AG04449 (cell line): ENCODE measurements at regions of chr2 and their contacts with region 1.

Region 1: GRCh38 chr2:96509114-96509846 is 4.1 kb upstream of the NEURL3 start:
- DNase-seq: peak; percentile 17
- H3K4me3 ChIP-seq: no peak overlapping the region
- CTCF ChIP-seq: peak; percentile 99

Region 2: GRCh38 chr2:96138179-96139145 is 370.8 kb before region 1 on chr2 and contains the start of gene ASTL:
- CTCF ChIA-PET with region 1: interaction called, 15 read pairs
- POLR2A ChIA-PET with region 1: no interaction called
- DNase-seq: no peak
- H3K4me3 ChIP-seq: no peak within 1 kb of the TSS
- CTCF ChIP-seq: peak; percentile 68

Region 3: DNA sequence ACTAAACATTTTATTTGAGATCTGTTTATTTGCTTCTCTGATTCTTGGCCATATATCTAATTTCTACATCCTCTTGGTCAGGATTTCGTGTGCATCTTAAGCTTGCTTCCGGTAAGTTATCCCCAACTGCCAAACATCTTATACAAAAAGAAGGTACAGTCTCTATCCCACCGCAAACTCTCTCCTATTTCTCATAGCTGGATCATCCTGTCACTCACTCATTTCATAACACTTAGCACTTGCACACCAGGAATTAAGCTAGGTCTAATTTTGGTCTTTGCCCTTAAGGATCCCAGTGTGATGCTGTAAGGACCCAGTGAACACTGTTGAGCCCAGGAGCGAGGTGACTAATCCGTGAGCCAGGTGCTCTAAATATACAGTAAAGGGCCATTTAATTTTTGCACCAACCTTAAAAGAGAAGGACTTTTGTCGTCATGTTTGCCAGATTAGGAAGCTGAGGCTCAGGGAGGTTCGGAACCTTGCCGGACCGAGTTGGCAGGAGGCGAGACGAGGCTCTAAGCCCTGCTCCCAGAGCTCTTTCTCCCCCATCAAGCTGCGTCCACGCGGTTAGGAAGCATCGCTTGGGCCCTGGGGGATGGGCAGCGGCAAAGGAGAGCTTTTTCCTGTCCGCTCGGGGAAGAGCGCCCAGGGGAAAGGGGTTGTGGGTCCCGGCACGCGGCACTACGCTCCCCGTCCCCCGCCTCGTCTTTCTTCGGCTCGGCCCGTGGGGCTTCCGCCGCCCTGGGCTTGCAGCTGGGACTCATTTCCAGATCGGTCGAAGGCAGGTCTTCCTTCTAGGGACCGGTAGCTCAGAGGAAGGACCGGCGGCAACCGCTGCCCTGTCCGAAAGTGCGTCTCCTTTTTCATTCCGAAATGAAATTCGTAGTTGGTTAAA is 188.3 kb before region 1 on chr2:
- CTCF ChIA-PET with region 1: interaction called, 10 read pairs
- POLR2A ChIA-PET with region 1: no interaction called
- DNase-seq: no peak
- H3K4me3 ChIP-seq: peak overlapping the region; percentile 65
- CTCF ChIP-seq: no peak

Region 4: GRCh38 chr2:96413323-96413722 is 96.0 kb before region 1 on chr2:
- CTCF ChIA-PET with region 1: interaction called, 340 read pairs
- POLR2A ChIA-PET with region 1: no interaction called
- DNase-seq: no peak
- H3K4me3 ChIP-seq: no peak overlapping the region
- CTCF ChIP-seq: no peak

Region 5: DNA sequence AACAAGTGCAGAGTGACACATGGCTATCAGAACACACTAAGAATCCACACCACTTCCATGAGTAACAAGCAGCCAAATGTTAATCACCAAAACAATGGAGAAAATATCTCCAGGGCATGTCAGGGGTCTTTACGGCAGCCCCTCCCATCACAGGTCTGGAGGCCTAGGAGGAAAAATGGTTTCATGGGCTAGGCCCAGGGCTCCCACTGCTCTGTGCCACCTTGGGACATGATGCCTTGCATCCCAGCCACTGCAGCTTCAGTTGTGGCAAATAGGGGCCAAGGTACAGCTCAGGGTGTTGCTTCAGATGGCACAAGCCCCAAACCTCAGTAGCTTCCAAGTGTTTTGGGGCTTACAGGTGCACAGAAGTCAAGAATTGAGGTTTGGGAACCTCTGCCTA is 70.7 kb before region 1 on chr2:
- CTCF ChIA-PET with region 1: no interaction called
- POLR2A ChIA-PET with region 1: no interaction called
- DNase-seq: no peak
- H3K4me3 ChIP-seq: no peak overlapping the region
- CTCF ChIP-seq: no peak

Region 6: DNA sequence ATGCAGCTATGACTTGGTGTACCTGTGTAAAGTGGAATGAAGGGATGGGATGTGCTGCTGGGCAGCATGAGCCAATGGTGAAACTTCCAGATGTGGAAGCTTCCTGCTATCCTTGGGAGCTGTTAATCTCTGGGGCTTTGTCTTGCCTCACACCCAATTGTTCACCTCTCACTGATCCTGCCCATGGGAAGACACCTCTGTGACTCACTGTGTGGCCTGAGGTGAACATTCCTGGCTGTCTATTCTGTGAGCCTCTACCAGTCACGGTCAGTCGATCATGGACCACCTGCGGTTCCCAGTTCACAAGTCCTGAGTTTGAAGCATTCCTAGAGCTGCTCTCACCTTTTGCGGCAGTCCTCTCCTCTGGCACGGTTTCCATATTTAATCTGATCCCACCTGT is 16.2 kb before region 1 on chr2:
- CTCF ChIA-PET with region 1: interaction called, 42 read pairs
- POLR2A ChIA-PET with region 1: no interaction called
- DNase-seq: no peak
- H3K4me3 ChIP-seq: no peak overlapping the region
- CTCF ChIP-seq: no peak

Region 7: GRCh38 chr2:96536445-96537065 is 27.3 kb after region 1 on chr2 and contains the start of gene ARID5A:
- CTCF ChIA-PET with region 1: interaction called, 98 read pairs
- POLR2A ChIA-PET with region 1: no interaction called
- DNase-seq: no peak
- H3K4me3 ChIP-seq: peak within 1 kb of the TSS; percentile 70
- CTCF ChIP-seq: peak; percentile 18

Region 8: DNA sequence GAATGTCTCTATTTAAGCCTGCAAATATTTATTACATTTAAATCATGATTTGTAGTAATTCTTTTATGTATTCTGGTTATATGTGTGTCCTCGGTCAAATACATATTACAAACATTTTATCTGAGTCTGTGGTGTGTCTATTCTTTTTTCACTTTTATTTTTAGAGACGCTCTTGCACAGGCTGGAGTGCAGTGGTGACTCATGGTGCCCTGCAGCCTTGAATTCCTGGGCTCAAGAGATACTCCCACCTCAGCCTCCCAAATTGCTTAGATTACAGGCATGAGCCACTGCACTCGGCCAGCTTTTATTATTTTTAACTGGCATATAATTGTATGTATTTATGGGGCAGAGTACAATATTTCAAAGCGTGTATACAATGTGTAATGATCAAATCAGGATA is 74.7 kb after region 1 on chr2:
- CTCF ChIA-PET with region 1: no interaction called
- POLR2A ChIA-PET with region 1: no interaction called
- DNase-seq: no peak
- H3K4me3 ChIP-seq: no peak overlapping the region
- CTCF ChIP-seq: no peak

Region 9: GRCh38 chr2:96625571-96626552 is 116.6 kb after region 1 on chr2:
- CTCF ChIA-PET with region 1: no interaction called
- POLR2A ChIA-PET with region 1: no interaction called
- DNase-seq: no peak
- H3K4me3 ChIP-seq: no peak overlapping the region
- CTCF ChIP-seq: no peak